Activated CD8-positive, alpha-beta memory T cell treated with anti-CD3 and anti-CD28 coated beads, Interleukin-2, amount 10 ng/mL, durations not matched to agents 7 days and 5 days (primary cell): ENCODE measurements at regions of chr3 and their contacts with region 1.

Region 1: DNA sequence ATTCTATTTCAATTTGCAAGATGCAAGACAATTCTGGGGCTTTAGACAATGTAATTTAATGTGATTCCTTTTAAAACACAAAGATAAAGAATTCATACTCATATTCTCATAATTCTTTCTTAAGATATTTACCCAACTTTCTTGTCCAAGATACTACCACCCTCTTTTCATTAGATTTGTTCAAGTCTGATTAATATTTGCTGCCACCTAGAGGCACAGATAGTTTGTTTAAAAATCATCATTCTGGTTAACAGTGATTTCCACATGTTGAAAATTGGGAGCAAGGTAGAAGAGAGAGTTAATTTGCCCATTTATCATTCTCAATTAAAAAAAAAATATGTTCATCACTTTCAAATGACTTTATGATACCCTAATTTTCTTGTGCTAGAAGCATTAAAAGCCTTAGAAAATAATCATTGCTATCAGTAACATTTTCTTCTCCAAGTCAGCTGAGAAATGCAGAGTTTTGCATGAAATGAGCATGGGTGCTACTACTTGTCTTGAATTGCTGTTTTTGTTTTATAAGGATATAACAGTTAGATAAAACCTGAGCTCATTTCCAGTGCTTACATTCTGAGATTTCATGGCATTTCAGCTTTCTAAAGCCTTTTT is 11.6 kb downstream of the TAMM41 start:
- DNase-seq: no peak
- ATAC-seq: no peak
- H3K4me3 Mint-ChIP-seq: no peak overlapping the region
- H3K27ac Mint-ChIP-seq: no peak overlapping the region
- H3K4me1 Mint-ChIP-seq: no peaks in the 10 kb centered on the region
- H3K27me3 Mint-ChIP-seq: no peaks in the 10 kb centered on the region

Region 2: DNA sequence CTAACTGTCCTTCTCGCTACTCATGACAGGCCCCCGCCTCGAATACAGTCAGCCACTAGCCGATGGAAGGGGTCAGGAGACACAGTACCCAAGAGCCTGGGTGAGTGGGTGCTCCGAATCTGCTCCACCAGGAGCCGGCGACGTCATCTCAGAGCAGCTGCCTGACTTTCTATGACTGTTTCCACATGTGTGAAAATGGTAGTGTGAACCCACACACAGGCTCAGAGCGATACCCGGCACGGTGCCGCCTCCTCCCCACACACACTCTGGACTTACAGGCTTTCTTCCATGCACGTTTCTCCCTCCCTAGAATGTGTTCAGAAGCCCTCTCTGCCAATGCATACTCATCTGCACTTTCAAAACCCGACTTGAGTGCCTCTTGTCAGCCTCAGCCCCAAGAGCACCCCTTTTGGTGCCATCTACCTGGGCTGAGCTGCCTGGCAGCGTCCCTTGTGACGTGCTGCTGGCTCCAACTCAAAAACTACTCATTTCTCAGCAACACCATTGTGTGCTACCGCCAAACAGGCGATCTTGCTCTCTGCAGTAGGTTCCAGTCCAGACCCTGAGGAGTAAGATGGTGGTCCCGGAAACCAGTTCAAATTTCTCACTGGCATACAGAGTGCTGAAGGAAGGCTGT is 221.2 kb before region 1 on chr3:
- CTCF ChIA-PET with region 1: no interaction called
- DNase-seq: no peak
- ATAC-seq: no peak
- H3K4me3 Mint-ChIP-seq: no peak overlapping the region
- H3K27ac Mint-ChIP-seq: no peak overlapping the region
- H3K4me1 Mint-ChIP-seq: peaks cover 12% of the 10 kb centered on the region
- H3K27me3 Mint-ChIP-seq: no peaks in the 10 kb centered on the region

Region 3: GRCh38 chr3:11819146-11819689 is 15.9 kb before region 1 on chr3:
- CTCF ChIA-PET with region 1: no interaction called
- DNase-seq: no peak
- ATAC-seq: no peak
- H3K4me3 Mint-ChIP-seq: no peak overlapping the region
- H3K27ac Mint-ChIP-seq: no peak overlapping the region
- H3K4me1 Mint-ChIP-seq: peaks cover 38% of the 10 kb centered on the region
- H3K27me3 Mint-ChIP-seq: no peaks in the 10 kb centered on the region

Region 4: DNA sequence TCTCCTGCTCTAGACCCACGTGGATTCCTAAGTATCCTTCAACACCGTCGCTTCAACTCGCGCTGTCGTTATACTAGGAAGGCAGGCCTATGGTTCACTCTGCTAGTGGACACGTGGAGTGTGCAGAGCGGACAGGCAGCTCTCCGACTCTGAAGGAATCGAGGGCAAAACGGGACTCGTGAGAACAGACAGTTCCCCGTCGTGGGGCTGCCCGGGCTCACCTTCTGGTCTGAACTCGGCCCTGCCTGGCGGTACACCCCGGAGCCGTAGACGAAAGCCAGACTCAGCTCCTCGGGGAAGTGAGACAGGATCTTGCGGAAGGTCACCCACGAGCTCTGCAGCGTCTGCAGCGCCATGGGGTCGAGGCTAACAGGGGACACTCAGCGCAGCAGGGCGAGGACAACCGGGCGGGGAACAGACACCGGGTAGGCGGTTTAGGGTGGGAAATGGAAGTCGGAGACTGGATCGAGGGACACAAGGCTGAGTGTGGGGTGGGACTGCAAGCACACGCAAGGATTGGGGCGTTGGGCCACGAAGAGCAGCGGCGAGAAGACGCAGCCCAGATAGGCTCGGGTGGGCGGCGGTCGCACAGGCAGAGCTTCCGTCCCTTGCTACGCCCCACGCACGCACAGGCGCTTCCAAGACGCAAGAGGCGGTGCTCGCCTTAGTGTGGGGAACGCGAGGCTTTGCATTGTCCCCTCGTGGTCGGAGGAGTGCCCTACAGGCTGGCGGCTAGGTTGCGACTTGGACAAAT is 11.3 kb after region 1 on chr3 and contains the start of gene TAMM41:
- CTCF ChIA-PET with region 1: interaction called, 10 read pairs
- DNase-seq: peak; percentile 95
- ATAC-seq: peak; percentile 99
- H3K4me3 Mint-ChIP-seq: peak within 1 kb of the TSS; percentile 97
- H3K27ac Mint-ChIP-seq: peak within 1 kb of the TSS; percentile 95
- H3K4me1 Mint-ChIP-seq: peaks cover 26% of the 10 kb centered on the region
- H3K27me3 Mint-ChIP-seq: no peaks in the 10 kb centered on the region
- total RNA-seq, gene TAMM41: 19.5 to 20.4 TPM